Astrocyte of the cerebellum (primary cell): ENCODE measurements at regions of chr11 and their contacts with region 1.

Region 1: GRCh38 chr11:10920205-10920604 is 62.4 kb upstream of the ZBED5 start:
- DNase-seq: no peak
- H3K4me3 ChIP-seq: no peak overlapping the region
- CTCF ChIP-seq: no peak

Region 2: DNA sequence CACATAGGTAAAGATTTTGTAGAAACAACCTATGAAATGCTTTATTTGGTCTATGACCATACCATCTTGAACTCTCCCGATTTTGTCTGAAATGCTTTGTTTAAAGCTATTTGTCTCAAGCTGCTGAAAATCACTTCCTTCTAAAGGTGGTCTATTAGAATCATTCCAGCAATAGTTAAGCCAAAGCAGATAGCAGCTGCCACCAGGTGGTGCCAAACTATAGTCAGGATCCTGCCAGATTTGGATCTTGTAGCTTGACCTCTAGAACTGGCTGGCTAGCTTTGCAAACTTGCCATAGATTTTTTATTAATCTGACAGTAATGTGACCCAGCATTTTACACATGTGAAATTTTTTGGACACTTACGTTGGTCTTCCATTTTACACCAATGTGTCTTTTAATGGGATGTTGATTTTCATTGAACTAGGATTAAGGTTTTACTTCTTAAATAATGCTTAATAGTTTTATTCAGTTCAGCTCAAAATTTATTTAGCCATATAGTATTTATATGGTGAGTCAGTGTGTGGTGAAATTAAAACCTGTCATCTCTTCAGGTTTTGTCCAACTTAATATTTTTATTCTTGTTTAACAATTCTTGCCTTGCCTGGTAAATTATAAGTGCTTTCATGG is 149.5 kb before region 1 on chr11:
- in situ Hi-C with region 1: no loop called
- DNase-seq: peak; percentile 20
- H3K4me3 ChIP-seq: no peak overlapping the region
- CTCF ChIP-seq: peak; percentile 86

Region 3: DNA sequence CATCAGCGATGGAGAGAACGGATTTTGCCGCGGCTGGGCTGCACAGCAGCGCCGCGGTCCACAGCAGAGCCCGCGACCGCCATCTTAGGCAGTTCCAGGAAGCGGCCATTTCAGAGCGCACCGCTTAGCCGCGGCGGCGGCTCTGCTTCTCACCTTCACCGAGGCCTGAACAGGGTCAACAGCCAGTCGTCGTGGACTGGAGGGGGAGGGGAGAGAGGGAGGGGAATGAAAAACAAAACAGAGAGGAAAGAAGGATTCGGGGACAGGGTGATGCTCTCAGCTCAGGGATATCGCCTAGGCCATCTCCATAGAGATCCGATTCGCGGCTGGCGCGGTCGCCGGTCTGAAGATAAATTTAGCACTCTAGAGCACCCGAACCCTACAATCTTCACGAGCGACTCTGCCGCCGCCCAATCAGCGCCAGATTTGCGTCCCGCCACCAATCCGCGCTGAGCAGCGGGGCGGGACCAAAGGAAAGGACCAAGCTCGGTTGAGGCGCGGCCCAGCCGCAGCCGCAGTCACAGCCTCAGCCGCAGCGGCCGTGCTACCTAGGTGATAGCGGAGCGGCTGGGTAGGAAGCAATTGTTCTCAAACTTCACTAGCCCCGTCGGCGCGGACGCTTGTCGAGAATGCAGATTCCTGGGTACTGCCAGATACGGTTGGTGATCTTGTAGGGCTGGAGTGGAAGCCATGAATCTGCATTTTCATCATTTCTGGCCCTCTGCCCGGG is 62.3 kb before region 1 on chr11 and contains the start of gene ZBED5:
- in situ Hi-C with region 1: no loop called
- DNase-seq: peak; percentile 93
- H3K4me3 ChIP-seq: peak within 1 kb of the TSS; percentile 97
- CTCF ChIP-seq: no peak

Region 4: GRCh38 chr11:10885703-10886363 is 34.4 kb before region 1 on chr11:
- in situ Hi-C with region 1: loop called (anchors 5 kb)
- DNase-seq: no peak
- H3K4me3 ChIP-seq: no peak overlapping the region
- CTCF ChIP-seq: no peak